Astrocyte of the cerebellum (primary cell): ENCODE measurements at regions of chr17 and their contacts with region 1.

Region 1: DNA sequence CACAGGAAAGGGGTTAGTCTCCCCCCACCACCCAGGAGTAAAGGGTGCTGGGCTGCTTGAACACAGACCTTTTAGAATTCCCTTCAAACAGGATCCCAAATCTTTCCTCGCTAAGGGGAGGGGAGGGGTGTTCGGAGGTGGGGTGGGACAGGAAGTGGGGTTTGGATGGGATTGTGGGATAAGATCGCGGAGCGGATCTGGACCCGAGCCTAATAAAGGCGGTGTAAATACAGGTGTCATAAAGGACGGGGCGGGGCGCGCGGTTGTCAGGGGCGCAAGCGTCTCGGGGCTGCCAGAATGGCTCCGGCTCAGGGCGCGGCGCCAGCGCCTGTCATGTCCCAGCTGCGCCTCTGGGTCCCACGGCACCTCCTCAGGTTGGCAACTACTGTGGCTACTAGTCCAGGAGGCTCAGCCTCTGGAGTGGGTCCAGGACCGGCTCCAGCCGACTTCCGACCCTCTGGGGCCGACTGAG is 59.8 kb upstream of the FBXO47 start:
- DNase-seq: no peak
- H3K4me3 ChIP-seq: peak overlapping the region; percentile 27
- CTCF ChIP-seq: no peak

Region 2: GRCh38 chr17:38994026-38994425 is 33.0 kb before region 1 on chr17:
- in situ Hi-C with region 1: loop called (anchors 5 kb)
- DNase-seq: no peak
- H3K4me3 ChIP-seq: no peak overlapping the region
- CTCF ChIP-seq: no peak